ENCODE measurements at regions of chr7 and their contacts with region 1.

Region 1: DNA sequence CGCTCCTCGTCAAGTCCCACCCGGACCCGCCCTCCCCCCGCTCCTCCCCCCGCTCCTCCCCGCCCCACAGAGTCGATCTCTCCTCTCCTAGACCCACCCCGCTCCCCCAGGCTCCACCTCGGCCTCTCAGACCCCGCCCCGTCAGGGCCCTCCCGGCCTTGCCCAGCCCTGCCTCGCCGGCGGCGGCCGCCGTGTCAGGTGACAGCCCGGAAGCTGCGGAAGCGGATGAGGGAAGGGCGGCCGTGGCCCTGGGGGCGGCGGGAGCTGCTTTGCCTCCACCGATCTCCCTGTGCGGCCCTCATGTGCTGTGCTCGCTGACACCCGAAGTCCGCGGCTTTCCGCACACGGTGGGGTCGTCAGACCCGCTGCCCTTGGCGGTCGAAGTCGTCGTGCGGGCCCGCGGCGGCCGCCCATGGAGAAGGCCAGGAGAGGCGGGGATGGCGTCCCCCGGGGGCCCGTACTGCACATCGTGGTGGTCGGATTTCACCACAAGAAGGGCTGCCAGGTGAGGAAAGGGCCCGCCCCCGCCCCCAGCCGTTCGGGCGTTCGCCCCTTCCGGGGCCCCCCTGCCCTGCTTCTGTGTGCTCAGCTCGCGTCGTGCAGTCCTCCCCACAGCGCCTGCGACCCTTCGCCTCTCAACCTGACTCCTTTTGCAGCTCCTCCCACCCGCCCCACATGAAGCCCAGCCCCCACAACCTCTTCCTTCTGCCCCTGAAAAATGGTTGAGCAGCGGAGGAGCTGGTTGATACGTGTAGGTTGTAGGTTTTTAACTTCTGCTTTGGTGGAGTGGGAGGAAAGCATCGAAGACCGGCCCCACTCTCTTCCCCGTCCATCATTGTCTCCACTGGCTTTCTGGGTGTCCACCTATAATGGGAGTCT is at the start of gene AVL9:
- DNase-seq: peak; percentile 99
- H3K4me3 ChIP-seq: peak within 1 kb of the TSS; percentile 79 to 99 (median 94)
- H3K27ac ChIP-seq: peak within 1 kb of the TSS; percentile 92 to 99 (median 97)
- H3K4me1 ChIP-seq: peaks cover 0 to 31% (median 18%) of the 10 kb centered on the region in 4 donors
- H3K27me3 ChIP-seq: no peaks in the 10 kb centered on the region
- CTCF ChIP-seq: no peak
- EP300 ChIP-seq: peak in 1 of 4 donors; percentile 17
- POLR2A ChIP-seq: peak; percentile 77 to 89
- total RNA-seq, gene AVL9: 18.5 to 25.0 (median 21.0) TPM

Region 2: DNA sequence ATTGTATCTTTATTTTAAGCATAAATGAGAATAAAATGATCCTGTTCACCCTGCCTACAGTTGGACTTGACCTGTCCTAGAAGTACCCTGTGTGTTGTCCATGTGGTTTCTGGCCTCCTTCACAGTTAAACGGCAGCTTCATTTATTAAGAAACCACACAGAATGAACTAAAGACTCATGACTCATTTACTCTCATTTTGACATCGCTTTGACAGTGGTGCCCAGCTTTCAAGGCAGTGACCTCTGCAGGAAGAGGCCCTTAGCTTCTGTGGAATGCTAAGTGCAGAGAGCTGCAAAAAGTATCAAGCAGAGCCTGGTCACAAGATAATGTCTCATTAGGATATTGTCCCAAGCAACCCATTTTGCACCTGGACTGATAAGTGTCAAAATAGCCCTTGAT is 93.1 kb after region 1 on chr7:
- intact Hi-C with region 1: loop called (anchors 10 kb)
- DNase-seq: no peak
- H3K4me3 ChIP-seq: no peak overlapping the region
- H3K27ac ChIP-seq: no peak overlapping the region
- H3K4me1 ChIP-seq: peaks cover 0 to 19% (median 18%) of the 10 kb centered on the region in 4 donors
- H3K27me3 ChIP-seq: no peaks in the 10 kb centered on the region
- CTCF ChIP-seq: no peak
- EP300 ChIP-seq: no peak
- POLR2A ChIP-seq: no peak

Region 3: DNA sequence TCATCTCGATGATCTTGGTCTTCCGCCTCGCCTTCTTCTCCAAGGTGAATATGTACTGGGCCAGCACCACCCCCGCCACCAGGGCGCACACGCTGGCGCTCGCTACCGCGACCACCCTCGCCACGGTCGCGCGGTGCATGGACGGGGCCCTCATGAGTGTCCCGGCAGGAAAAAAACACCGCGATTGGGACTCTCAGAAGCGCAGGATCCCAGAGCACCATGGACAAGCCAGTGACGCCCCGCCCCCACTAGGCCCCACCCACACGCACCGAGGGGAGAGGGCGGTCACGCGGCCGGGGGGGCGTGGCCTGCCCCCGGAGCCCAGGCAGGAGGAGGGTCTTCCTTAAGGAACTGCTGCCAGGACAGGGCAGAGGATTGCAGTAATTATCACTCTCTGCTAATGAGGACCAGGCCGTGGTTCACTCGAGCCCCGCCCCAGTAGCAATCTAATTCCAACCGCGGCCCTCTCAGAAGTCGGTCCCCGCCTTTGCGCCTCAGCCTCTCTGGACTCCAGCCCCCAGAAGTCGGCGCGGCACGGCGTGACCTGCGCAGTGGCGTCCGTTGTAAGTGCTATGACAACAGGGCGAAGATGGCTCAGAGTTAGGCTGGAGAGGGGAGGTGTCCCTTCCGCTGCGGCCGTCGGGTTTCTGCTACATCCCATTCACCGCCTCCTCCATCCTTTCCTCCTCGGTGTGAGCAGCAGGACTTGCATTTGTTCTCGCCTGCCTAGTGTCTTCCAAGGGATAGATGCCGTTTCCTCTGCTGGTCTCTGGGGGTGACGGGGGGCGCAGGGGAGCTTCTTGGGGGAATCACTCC is 633.7 kb after region 1 on chr7 and contains the start of gene BBS9:
- intact Hi-C with region 1: loop called (anchors 5 kb)
- DNase-seq: peak; percentile 96
- H3K4me3 ChIP-seq: peak within 1 kb of the TSS; percentile 72 to 84 (median 74)
- H3K27ac ChIP-seq: peak within 1 kb of the TSS; percentile 86 to 88 (median 88)
- H3K4me1 ChIP-seq: peaks cover 0 to 30% (median 16%) of the 10 kb centered on the region in 4 donors
- H3K27me3 ChIP-seq: no peaks in the 10 kb centered on the region
- CTCF ChIP-seq: no peak
- EP300 ChIP-seq: no peak
- POLR2A ChIP-seq: peak in 1 of 2 donors; percentile 47
- total RNA-seq, gene BBS9: 30.5 to 36.6 (median 33.9) TPM